Naive thymus-derived CD4-positive, alpha-beta T cell (primary cell): ENCODE measurements at regions of chr1 and their contacts with region 1.

Region 1: GRCh38 chr1:110630839-110631663 is 24.9 kb upstream of the KCNA2 start:
- DNase-seq: peak; percentile 74 to 87 (median 84)
- ATAC-seq: peak; percentile 87
- H3K4me3 ChIP-seq: peak overlapping the region; percentile 50
- H3K4me3 Mint-ChIP-seq: no peak overlapping the region
- H3K27ac ChIP-seq: peak overlapping the region; percentile 57
- H3K27ac Mint-ChIP-seq: no peak overlapping the region
- H3K4me1 ChIP-seq: peaks cover 58 to 59% of the 10 kb centered on the region in 2 donors
- H3K4me1 Mint-ChIP-seq: peaks cover 38 to 62% (median 52%) of the 10 kb centered on the region in 7 donors
- H3K27me3 ChIP-seq: no peaks in the 10 kb centered on the region
- H3K27me3 Mint-ChIP-seq: no peaks in the 10 kb centered on the region

Region 2: GRCh38 chr1:110657351-110657750 is 26.3 kb after region 1 on chr1:
- CTCF ChIA-PET with region 1: no interaction called
- POLR2A ChIA-PET with region 1: interaction called, 140 read pairs
- intact Hi-C with region 1: no loop called
- DNase-seq: no peak
- ATAC-seq: no peak
- H3K4me3 ChIP-seq: no peak overlapping the region
- H3K4me3 Mint-ChIP-seq: no peak overlapping the region
- H3K27ac ChIP-seq: no peak overlapping the region
- H3K27ac Mint-ChIP-seq: peak overlapping the region in 8 of 9 donors; percentile 14 to 90 (median 63)
- H3K4me1 ChIP-seq: peaks cover 4 to 13% of the 10 kb centered on the region in 2 donors
- H3K4me1 Mint-ChIP-seq: peaks cover 16 to 63% (median 47%) of the 10 kb centered on the region in 7 donors
- H3K27me3 ChIP-seq: no peaks in the 10 kb centered on the region
- H3K27me3 Mint-ChIP-seq: no peaks in the 10 kb centered on the region

Region 3: DNA sequence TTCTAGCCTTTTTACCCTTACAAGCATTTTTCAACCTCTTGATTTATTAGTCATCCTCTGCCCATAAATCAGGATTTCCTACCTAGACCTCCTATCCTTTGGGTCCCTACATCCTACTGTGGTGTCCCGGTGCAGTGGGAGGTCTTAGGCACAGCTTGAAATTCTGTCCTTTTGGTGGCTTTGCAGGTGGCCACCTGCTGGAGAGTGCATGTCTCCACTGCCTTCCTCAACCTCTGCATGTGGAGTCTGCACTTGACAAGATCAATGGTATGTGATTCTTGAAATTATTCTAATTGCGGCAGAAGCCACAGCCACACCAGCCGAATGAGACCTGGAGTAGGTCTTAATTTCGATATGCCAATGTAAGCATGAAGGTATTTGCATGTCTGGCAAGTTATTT is 55.1 kb after region 1 on chr1:
- CTCF ChIA-PET with region 1: interaction called, 3 read pairs
- POLR2A ChIA-PET with region 1: interaction called, 4 read pairs
- intact Hi-C with region 1: loop called in 1 of 2 experiments (anchors 1 kb)
- DNase-seq: peak in 7 of 9 donors; percentile 15 to 47 (median 28)
- ATAC-seq: peak; percentile 62
- H3K4me3 ChIP-seq: no peak overlapping the region
- H3K4me3 Mint-ChIP-seq: no peak overlapping the region
- H3K27ac ChIP-seq: no peak overlapping the region
- H3K27ac Mint-ChIP-seq: peak overlapping the region in 4 of 9 donors; percentile 2 to 60 (median 44)
- H3K4me1 ChIP-seq: no peaks in the 10 kb centered on the region
- H3K4me1 Mint-ChIP-seq: peaks cover 0 to 11% (median 5%) of the 10 kb centered on the region in 7 donors
- H3K27me3 ChIP-seq: no peaks in the 10 kb centered on the region
- H3K27me3 Mint-ChIP-seq: peaks cover 0 to 13% (median 0%) of the 10 kb centered on the region in 5 donors

Region 4: DNA sequence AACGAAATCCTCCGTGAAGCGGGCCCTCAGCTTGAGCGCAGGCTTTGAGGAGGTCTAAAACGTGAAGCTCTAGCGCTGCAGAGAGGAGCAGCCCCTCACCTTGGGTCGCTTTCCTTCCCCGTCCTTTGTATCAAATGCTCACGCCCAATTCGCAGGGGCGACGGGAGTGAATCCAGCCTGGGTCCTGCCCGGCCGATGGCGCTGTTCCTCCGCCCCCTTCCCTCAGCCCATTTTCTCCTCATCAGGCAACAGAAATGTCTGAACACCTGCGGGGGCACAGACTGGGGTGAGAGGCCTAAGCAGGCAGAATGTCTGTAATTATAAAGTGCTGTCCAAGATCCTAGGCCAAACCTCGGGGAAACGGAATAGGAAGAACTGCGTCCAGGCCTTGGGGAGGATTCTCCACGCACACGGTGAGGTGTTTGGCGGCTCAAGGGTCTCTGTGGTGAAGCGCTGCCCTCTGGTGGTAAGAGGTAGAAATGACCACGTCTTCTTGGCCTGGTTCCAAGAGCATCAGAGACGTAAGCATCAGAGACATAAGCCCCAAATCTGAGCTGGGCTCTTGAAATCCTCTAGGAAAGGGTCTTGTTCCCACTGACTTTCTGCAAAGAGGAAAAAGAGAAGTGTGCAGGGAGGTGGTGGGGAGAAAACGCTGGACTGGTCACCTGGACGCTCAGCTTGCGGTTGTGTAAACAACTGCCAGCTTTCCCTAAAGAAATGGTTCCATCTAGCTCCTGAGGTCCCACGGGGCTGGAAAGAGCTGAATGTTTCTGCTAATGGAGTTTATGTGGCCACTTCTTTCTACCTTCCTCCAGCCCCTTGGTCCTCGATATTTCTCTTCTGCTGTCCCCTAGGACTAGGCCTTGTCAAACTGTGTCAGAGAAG is 149.8 kb after region 1 on chr1:
- CTCF ChIA-PET with region 1: interaction called, 7 read pairs
- POLR2A ChIA-PET with region 1: no interaction called
- intact Hi-C with region 1: loop called (anchors 1 to 2 kb)
- DNase-seq: peak; percentile 48 to 83 (median 74)
- ATAC-seq: peak; percentile 88
- H3K4me3 ChIP-seq: no peak overlapping the region
- H3K4me3 Mint-ChIP-seq: peak overlapping the region in 5 of 10 donors; percentile 29 to 61 (median 42)
- H3K27ac ChIP-seq: no peak overlapping the region
- H3K27ac Mint-ChIP-seq: peak overlapping the region in 5 of 9 donors; percentile 2 to 82 (median 34)
- H3K4me1 ChIP-seq: peaks cover 31 to 40% of the 10 kb centered on the region in 2 donors
- H3K4me1 Mint-ChIP-seq: peaks cover 18 to 54% (median 45%) of the 10 kb centered on the region in 7 donors
- H3K27me3 ChIP-seq: no peaks in the 10 kb centered on the region
- H3K27me3 Mint-ChIP-seq: peaks cover 0 to 28% (median 0%) of the 10 kb centered on the region in 5 donors

Region 5: DNA sequence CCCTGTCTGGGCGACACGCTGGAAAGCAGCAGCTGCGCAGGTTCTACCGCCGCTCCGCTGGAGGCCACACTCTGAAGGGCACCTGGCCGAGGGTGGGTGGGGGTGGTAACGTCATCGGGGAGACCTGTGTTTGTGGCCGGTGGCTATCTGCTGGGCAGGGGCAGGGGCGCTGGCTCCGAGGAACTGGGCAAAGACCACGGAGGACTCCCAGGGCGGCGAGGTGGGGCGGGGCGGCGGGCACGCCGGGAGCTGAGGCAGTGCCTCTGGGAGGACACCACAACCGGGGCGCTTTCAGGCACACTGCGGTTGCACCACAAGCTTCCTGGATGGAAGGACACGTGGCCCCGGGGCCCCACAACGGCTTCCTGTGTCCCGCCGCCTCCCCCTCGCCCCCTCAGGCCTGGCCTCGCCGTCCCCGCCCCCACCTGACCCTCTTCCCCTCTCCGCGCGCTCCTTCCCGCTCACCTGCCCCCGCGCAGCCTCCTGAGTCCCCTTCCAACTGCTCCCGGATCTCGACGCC is 572.7 kb after region 1 on chr1:
- CTCF ChIA-PET with region 1: no interaction called
- POLR2A ChIA-PET with region 1: no interaction called
- intact Hi-C with region 1: loop called in 1 of 2 experiments (anchors 10 kb)
- DNase-seq: peak; percentile 51 to 86 (median 82)
- ATAC-seq: peak; percentile 71
- H3K4me3 ChIP-seq: peak overlapping the region; percentile 84
- H3K4me3 Mint-ChIP-seq: peak overlapping the region; percentile 90 to 100 (median 99)
- H3K27ac ChIP-seq: peak overlapping the region; percentile 90
- H3K27ac Mint-ChIP-seq: peak overlapping the region; percentile 80 to 99 (median 96)
- H3K4me1 ChIP-seq: peaks cover 30 to 32% of the 10 kb centered on the region in 2 donors
- H3K4me1 Mint-ChIP-seq: peaks cover 32 to 76% (median 61%) of the 10 kb centered on the region in 7 donors
- H3K27me3 ChIP-seq: no peaks in the 10 kb centered on the region
- H3K27me3 Mint-ChIP-seq: no peaks in the 10 kb centered on the region